ENCODE measurements at regions of chr2 and their contacts with region 1.

Region 1: DNA sequence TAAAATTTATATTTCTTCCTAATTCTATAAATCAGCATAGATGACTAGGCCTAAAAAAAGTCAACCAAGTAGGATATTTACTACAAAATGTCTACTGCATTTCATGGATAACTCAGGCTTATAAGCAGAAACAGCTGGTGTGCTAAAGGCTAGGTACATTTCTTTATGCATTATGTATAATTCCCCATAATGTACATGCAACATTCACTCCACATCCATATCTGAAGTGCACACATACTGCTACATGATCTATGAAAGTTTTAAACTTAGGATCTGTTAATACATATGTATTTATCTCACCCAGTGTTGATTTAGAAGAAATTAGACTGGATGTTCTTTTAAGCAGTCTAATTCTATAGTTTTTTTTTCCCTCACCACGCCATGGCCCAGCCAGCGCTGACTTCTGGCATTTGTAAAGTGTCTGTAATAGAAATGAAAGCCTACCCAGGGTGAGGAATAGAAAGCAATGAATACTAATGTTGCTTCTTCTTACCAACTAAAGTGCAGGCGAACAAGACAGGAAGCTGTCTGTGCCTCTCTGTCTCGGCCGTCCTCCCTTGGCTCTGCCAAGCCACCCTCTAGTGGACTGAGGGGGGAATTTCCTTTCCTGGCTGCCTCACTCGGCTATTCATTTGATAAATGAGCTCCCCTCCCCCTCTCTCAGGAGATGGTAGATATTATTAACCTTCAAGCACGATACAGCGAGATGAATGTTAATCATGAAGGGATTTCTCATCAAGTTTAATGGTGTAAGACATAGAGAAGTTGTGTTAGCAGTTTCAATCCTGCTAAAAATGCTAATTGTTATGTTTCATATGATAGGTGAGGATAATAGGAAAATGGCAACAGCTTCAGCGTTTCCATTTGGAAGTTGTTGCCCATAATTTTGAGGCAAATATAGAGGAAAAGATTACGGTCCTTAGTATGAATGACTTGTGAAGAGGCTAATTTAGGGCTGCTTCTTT is 384.5 kb downstream of the MTX2 start:
- DNase-seq: peak; percentile 79
- H3K4me3 ChIP-seq: no peak overlapping the region
- H3K27ac ChIP-seq: no peak overlapping the region
- H3K4me1 ChIP-seq: peaks cover 10% of the 10 kb centered on the region
- CTCF ChIP-seq: peak; percentile 85

Region 2: GRCh38 chr2:175057078-175057685 is 1596.6 kb before region 1 on chr2:
- CTCF ChIA-PET with region 1: no interaction called
- POLR2A ChIA-PET with region 1: no interaction called
- intact Hi-C with region 1: no loop called
- DNase-seq: no peak
- H3K4me3 ChIP-seq: no peak overlapping the region
- H3K27ac ChIP-seq: no peak overlapping the region
- H3K4me1 ChIP-seq: no peaks in the 10 kb centered on the region
- CTCF ChIP-seq: no peak

Region 3: GRCh38 chr2:176126929-176127773 is 526.6 kb before region 1 on chr2:
- CTCF ChIA-PET with region 1: interaction called, 4 read pairs
- POLR2A ChIA-PET with region 1: interaction called, 3 read pairs
- intact Hi-C with region 1: loop called (anchors 1 kb)
- DNase-seq: peak; percentile 66
- H3K4me3 ChIP-seq: no peak overlapping the region
- H3K27ac ChIP-seq: no peak overlapping the region
- H3K4me1 ChIP-seq: no peaks in the 10 kb centered on the region
- CTCF ChIP-seq: peak; percentile 99

Region 4: GRCh38 chr2:176140513-176141317 is 513.0 kb before region 1 on chr2:
- CTCF ChIA-PET with region 1: no interaction called
- POLR2A ChIA-PET with region 1: interaction called, 4 read pairs
- intact Hi-C with region 1: loop called (anchors 1 kb)
- DNase-seq: peak; percentile 68
- H3K4me3 ChIP-seq: peak overlapping the region; percentile 57
- H3K27ac ChIP-seq: no peak overlapping the region
- H3K4me1 ChIP-seq: peaks cover 3% of the 10 kb centered on the region
- CTCF ChIP-seq: peak; percentile 80

Region 5: DNA sequence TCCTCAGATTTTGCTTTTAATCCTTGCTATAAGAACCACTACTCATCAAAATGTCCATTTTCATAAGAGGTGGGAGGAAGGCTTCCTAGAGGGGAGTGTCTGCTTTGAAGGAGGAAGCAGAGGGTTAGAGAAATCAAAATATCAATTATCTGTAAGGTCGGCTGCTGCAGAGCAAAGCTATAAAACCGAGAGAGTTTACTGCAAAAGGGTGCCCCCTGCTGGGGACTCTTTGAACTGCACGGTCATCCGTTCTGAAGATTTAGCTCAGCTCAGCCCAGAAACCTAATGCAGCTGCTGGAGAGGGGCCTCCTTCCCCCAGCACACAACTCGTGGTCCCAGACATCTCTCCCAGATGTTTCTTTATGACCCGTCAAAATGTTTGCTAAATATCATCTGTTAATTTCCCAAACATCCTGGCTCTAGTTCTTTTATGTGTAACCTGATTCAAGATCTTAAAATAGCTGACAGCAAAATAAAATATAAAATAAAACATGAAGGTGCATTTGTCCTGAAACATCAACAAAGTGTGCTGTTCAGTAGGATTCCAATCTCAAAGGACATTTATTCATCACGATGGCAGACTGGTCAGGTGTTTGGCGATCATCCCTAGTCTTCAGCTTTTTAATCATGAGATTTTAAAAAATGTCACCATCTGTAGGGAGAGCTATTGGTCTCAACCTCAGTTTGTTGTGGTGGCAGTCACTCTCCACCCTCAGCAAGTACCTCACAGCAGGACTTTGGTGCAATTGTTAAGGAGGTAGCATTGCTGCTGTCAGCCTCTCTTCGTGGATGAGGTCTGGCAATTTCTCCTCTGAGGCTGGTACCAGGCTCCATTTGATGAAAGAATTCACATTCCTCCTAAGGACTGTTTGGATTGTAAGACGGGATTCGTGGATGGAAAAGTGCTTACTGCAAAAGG is 198.6 kb before region 1 on chr2:
- CTCF ChIA-PET with region 1: no interaction called
- POLR2A ChIA-PET with region 1: interaction called, 3 read pairs
- intact Hi-C with region 1: loop called (anchors 2 kb)
- DNase-seq: peak; percentile 73
- H3K4me3 ChIP-seq: no peak overlapping the region
- H3K27ac ChIP-seq: no peak overlapping the region
- H3K4me1 ChIP-seq: no peaks in the 10 kb centered on the region
- CTCF ChIP-seq: peak; percentile 94

Region 6: DNA sequence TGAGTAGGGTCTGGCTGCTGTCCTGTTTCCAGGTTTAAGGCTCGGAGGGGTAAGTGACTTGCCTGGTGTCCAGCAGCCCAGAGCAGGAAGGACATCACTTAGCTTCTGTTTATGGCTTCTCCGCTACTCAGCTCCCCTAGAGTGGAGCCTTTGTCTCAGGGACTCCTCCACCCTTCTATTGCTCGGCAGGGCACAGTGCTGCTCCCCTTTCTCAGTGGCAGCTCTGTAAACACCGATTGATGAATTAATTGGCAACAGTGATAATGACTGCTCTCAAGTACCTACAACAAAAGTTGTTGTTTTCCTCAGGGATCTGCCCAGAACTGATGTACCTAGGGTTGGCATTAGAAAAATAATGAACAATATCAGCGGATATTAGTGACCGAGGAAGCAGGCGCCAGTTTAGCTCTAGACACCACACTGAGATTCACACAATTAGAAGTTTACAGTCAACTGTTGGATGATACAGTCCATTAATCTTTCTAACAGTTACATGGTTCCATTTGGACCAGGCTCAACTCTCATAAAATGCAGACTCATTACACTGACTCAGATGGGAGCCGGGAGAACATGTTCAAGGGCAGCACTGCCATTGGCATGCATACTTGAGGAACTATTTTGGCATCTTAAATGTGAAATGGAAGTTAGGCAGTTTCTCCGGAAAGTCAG is 118.8 kb before region 1 on chr2:
- CTCF ChIA-PET with region 1: no interaction called
- POLR2A ChIA-PET with region 1: no interaction called
- intact Hi-C with region 1: no loop called
- DNase-seq: no peak
- H3K4me3 ChIP-seq: no peak overlapping the region
- H3K27ac ChIP-seq: no peak overlapping the region
- H3K4me1 ChIP-seq: no peaks in the 10 kb centered on the region
- CTCF ChIP-seq: no peak

Region 7: DNA sequence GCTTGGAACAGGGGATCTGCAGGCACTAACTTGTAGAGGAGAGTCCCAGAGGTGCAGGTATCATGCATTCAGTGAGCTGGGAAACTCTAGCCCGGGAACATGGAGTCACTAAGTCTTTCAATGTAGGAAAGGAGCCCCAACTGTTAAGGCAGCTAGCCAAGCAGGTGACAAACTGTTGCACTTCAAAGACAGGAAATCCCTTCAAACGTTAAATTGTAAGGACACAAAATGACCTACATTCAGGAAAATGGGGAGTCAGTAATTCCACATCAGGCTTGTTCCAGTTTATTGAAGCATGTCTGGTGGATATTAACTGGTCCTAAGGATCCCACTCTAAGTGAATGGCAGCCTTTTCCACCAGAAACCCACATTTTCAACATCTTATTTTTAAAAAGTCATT is 20.0 kb before region 1 on chr2:
- CTCF ChIA-PET with region 1: no interaction called
- POLR2A ChIA-PET with region 1: no interaction called
- intact Hi-C with region 1: no loop called
- DNase-seq: no peak
- H3K4me3 ChIP-seq: no peak overlapping the region
- H3K27ac ChIP-seq: no peak overlapping the region
- H3K4me1 ChIP-seq: no peaks in the 10 kb centered on the region
- CTCF ChIP-seq: no peak

Region 8: DNA sequence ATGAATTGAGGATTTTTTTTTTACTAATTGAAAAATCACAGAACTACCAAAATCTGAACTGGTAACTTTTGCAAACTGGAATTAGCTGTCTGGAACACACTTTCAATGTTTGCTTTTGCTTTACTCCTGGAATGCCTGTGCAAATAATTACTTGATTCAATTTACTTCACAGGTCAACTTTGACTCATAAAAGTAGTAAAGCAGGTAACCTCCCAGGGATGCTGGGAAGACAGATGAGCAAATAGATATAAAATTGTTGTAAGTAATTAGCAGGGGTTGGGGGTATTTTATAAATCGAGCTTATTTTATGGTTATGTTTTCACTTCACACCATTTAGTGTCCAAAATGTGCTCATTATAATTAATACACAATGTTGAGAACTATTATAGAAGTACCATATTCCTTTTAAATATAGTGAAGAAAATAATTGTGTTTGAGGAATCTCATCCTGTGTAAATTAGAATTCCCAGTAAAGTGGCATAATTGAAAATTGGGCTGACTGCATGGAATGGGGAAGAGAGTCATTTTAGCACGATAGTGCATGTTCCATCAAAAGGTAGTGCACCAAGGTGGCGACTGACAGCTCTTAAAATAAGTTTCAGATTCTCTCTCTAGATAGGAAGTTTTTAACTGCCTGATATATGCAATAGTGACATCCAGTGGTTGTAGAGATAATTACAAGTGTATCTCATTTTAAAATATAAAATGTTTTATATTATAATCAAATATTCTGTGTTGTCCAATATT is 160.7 kb after region 1 on chr2:
- CTCF ChIA-PET with region 1: no interaction called
- POLR2A ChIA-PET with region 1: interaction called, 4 read pairs
- intact Hi-C with region 1: loop called (anchors 5 kb)
- DNase-seq: peak; percentile 78
- H3K4me3 ChIP-seq: no peak overlapping the region
- H3K27ac ChIP-seq: no peak overlapping the region
- H3K4me1 ChIP-seq: peaks cover 17% of the 10 kb centered on the region
- CTCF ChIP-seq: peak; percentile 89

Region 9: DNA sequence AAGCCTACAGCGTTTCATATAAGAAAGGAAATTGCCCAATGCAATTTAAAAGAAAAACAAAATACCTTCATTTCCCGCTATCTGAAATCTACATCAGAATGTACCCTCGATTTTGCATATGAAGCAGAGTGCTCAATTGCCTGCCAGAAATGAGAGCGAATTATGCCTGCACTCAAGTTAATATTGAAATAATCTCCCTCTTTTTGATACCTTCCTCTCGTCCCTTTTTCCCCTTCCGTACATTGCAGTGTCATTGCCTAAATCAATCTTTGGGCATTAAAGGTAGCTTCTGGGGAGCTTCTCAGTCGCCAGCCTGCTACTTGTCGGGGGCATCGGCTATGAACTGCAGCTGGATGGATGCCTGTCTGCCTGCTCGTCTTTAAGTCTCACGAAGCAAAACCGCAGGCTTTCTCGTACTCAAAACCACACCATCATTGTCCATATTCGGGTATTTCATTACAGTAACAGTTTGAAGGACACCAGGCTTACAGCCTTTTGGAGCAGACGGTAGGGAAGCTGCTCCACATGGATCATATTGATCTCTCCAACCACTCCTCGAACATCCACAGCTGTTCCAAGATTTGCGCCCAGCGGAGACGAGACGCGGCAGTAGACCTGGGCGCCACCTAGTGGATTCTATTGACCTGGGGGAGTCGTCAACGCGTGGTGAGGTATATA is 494.9 kb after region 1 on chr2:
- CTCF ChIA-PET with region 1: no interaction called
- POLR2A ChIA-PET with region 1: no interaction called
- intact Hi-C with region 1: loop called (anchors 10 kb)
- DNase-seq: peak; percentile 75
- H3K4me3 ChIP-seq: peak overlapping the region; percentile 65
- H3K27ac ChIP-seq: no peak overlapping the region
- H3K4me1 ChIP-seq: peaks cover 9% of the 10 kb centered on the region
- CTCF ChIP-seq: peak; percentile 98

Measured in OCI-LY7 (cell line).